HEK293T (cell line): ENCODE measurements at regions of chr16 and their contacts with region 1.

Region 1: GRCh38 chr16:88569985-88570690 is at the start of gene ZC3H18:
- DNase-seq: peak; percentile 99

Region 2: GRCh38 chr16:88452482-88453216 is 117.5 kb before region 1 on chr16:
- CTCF ChIA-PET with region 1: no interaction called
- POLR2A ChIA-PET with region 1: interaction called, 10 read pairs
- DNase-seq: peak; percentile 98

Region 3: DNA sequence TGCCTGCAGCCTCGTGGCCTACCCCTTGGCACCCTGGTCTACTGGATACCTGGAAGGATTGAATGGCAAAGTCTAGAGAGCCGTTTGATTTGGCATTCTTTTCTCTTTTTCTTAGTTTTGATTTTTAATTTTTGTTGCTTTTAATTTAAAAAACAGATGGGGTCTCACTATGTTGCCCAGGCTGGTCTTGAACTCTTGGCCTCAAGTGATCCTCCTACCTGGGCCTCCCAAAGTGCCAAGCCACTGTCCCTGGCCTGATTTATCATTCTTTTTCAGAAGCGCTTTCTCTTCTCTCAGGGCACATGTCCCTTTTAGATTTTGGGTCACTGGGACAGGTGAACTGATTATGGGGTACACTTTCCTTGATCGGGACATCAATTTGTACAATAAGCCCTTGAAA is 10.9 kb after region 1 on chr16:
- CTCF ChIA-PET with region 1: no interaction called
- POLR2A ChIA-PET with region 1: interaction called, 10 read pairs
- DNase-seq: no peak